Body of pancreas (tissue), 4 donors: ENCODE measurements at regions of chr22 and their contacts with region 1.

Region 1: GRCh38 chr22:32796865-32797573 is 4.5 kb upstream of the TIMP3 start:
- DNase-seq: peak; percentile 62 to 72 (median 68)
- ATAC-seq: peak; percentile 66
- H3K4me3 ChIP-seq: no peak overlapping the region
- H3K27ac ChIP-seq: no peak overlapping the region
- H3K4me1 ChIP-seq: peaks cover 9% of the 10 kb centered on the region
- H3K27me3 ChIP-seq: peaks cover 0 to 4% of the 10 kb centered on the region in 2 donors
- CTCF ChIP-seq: peak; percentile 65 to 89 (median 83)
- POLR2A ChIP-seq: no peak

Region 2: GRCh38 chr22:32660292-32660691 is 136.7 kb before region 1 on chr22:
- intact Hi-C with region 1: loop called (anchors 5 kb)
- DNase-seq: peak; percentile 68 to 73 (median 70)
- ATAC-seq: peak; percentile 64
- H3K4me3 ChIP-seq: no peak overlapping the region
- H3K27ac ChIP-seq: no peak overlapping the region
- H3K4me1 ChIP-seq: no peaks in the 10 kb centered on the region
- H3K27me3 ChIP-seq: no peaks in the 10 kb centered on the region
- CTCF ChIP-seq: peak; percentile 53 to 86 (median 73)
- POLR2A ChIP-seq: no peak

Region 3: DNA sequence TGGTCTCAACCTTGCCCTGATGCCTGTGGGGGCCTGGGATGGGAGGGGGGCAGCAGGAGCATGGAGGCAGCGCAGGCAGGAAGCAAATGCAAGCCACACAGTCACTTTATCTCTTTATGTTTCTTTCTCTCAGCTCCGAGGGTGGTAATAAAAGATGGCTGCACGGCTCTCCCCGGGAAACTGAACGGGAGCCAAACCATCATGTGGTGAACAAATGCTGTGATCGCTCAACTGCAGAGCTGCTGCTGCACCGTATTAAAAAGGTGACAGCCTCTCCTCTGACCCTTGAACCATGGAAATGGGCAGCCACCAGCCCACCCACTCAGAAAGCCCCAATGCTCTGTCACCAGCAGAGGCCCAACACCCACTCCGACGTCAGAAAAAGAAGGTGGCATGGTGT is 114.5 kb after region 1 on chr22:
- intact Hi-C with region 1: no loop called
- DNase-seq: no peak
- ATAC-seq: no peak
- H3K4me3 ChIP-seq: no peak overlapping the region
- H3K27ac ChIP-seq: no peak overlapping the region
- H3K4me1 ChIP-seq: no peaks in the 10 kb centered on the region
- H3K27me3 ChIP-seq: peaks cover 0 to 8% of the 10 kb centered on the region in 2 donors
- CTCF ChIP-seq: no peak
- POLR2A ChIP-seq: no peak

Region 4: GRCh38 chr22:32991353-32992121 is 194.5 kb after region 1 on chr22:
- intact Hi-C with region 1: no loop called
- DNase-seq: no peak
- ATAC-seq: no peak
- H3K4me3 ChIP-seq: no peak overlapping the region
- H3K27ac ChIP-seq: no peak overlapping the region
- H3K4me1 ChIP-seq: no peaks in the 10 kb centered on the region
- H3K27me3 ChIP-seq: no peaks in the 10 kb centered on the region
- CTCF ChIP-seq: no peak
- POLR2A ChIP-seq: no peak